Esophagus muscularis mucosa (tissue), 4 donors: ENCODE measurements at regions of chr15 and their contacts with region 1.

Region 1: GRCh38 chr15:62306851-62307504 is 141.9 kb upstream of the C2CD4B start:
- DNase-seq: no peak
- H3K4me3 ChIP-seq: no peak overlapping the region
- H3K27ac ChIP-seq: no peak overlapping the region
- H3K4me1 ChIP-seq: peaks cover 0 to 4% (median 2%) of the 10 kb centered on the region in 4 donors
- H3K27me3 ChIP-seq: peaks cover 0 to 9% (median 2%) of the 10 kb centered on the region in 4 donors
- CTCF ChIP-seq: peak; percentile 63 to 66 (median 63)
- EP300 ChIP-seq: no peak
- POLR2A ChIP-seq: no peak

Region 2: GRCh38 chr15:62075595-62076282 is 231.2 kb before region 1 on chr15:
- intact Hi-C with region 1: loop called (anchors 5 kb)
- DNase-seq: no peak
- H3K4me3 ChIP-seq: no peak overlapping the region
- H3K27ac ChIP-seq: no peak overlapping the region
- H3K4me1 ChIP-seq: no peaks in the 10 kb centered on the region
- H3K27me3 ChIP-seq: no peaks in the 10 kb centered on the region
- CTCF ChIP-seq: no peak
- EP300 ChIP-seq: no peak
- POLR2A ChIP-seq: no peak

Region 3: DNA sequence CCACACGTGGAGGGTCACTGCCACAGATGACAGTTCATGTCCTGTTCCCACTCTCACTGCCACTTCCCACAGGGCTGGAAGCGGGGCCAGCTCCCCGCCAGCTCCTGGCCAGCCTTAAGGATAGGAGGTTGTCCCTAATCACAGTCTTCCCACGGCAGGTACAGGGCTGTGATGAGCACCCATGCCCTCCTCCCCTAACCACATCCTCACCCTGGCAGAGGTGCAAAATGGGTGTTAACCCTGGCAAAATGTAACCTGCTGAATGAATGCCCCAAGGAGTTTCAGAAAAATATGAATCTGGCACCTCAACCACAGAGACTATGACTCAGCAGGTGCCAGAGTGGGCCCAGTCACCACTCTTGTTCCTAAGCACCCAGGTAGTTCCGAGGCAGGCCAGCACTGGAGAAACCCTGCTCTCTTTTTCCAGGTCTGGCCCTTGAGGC is 550.5 kb after region 1 on chr15:
- intact Hi-C with region 1: no loop called
- DNase-seq: peak; percentile 85
- H3K4me3 ChIP-seq: no peak overlapping the region
- H3K27ac ChIP-seq: peak overlapping the region in 3 of 4 donors; percentile 4 to 55 (median 37)
- H3K4me1 ChIP-seq: peaks cover 0 to 49% (median 46%) of the 10 kb centered on the region in 4 donors
- H3K27me3 ChIP-seq: no peaks in the 10 kb centered on the region
- CTCF ChIP-seq: no peak
- EP300 ChIP-seq: no peak
- POLR2A ChIP-seq: no peak